Naive thymus-derived CD8-positive, alpha-beta T cell (primary cell): ENCODE measurements at regions of chr9 and their contacts with region 1.

Region 1: GRCh38 chr9:122350638-122351355 is 20.0 kb upstream of the PTGS1 start:
- DNase-seq: peak; percentile 62 to 86 (median 74)
- ATAC-seq: peak; percentile 76 to 78
- H3K4me3 Mint-ChIP-seq: peak overlapping the region in 1 of 10 donors; percentile 47
- H3K27ac Mint-ChIP-seq: peak overlapping the region in 3 of 10 donors; percentile 44 to 75 (median 66)
- H3K4me1 Mint-ChIP-seq: peaks cover 22 to 31% (median 30%) of the 10 kb centered on the region in 4 donors
- H3K27me3 Mint-ChIP-seq: peaks cover 0 to 22% (median 7%) of the 10 kb centered on the region in 5 donors

Region 2: GRCh38 chr9:122125158-122125508 is 225.7 kb before region 1 on chr9:
- POLR2A ChIA-PET with region 1: interaction called, 22 read pairs
- DNase-seq: peak; percentile 59 to 89 (median 76)
- ATAC-seq: peak; percentile 78 to 81
- H3K4me3 Mint-ChIP-seq: peak overlapping the region; percentile 40 to 81 (median 62)
- H3K27ac Mint-ChIP-seq: peak overlapping the region in 4 of 10 donors; percentile 9 to 67 (median 44)
- H3K4me1 Mint-ChIP-seq: peaks cover 9 to 36% (median 29%) of the 10 kb centered on the region in 4 donors
- H3K27me3 Mint-ChIP-seq: peaks cover 10 to 43% (median 22%) of the 10 kb centered on the region in 5 donors